ENCODE measurements at regions of chr19 and their contacts with region 1.

Region 1: GRCh38 chr19:52690369-52691214 is 44.3 kb downstream of the ZNF611 start:
- DNase-seq: peak; percentile 98 to 99
- ATAC-seq: peak; percentile 100
- H3K4me3 ChIP-seq: peak overlapping the region; percentile 11 to 36
- H3K27ac ChIP-seq: peak overlapping the region; percentile 92 to 97
- H3K4me1 ChIP-seq: no peaks in the 10 kb centered on the region
- H3K27me3 ChIP-seq: no peaks in the 10 kb centered on the region

Region 2: DNA sequence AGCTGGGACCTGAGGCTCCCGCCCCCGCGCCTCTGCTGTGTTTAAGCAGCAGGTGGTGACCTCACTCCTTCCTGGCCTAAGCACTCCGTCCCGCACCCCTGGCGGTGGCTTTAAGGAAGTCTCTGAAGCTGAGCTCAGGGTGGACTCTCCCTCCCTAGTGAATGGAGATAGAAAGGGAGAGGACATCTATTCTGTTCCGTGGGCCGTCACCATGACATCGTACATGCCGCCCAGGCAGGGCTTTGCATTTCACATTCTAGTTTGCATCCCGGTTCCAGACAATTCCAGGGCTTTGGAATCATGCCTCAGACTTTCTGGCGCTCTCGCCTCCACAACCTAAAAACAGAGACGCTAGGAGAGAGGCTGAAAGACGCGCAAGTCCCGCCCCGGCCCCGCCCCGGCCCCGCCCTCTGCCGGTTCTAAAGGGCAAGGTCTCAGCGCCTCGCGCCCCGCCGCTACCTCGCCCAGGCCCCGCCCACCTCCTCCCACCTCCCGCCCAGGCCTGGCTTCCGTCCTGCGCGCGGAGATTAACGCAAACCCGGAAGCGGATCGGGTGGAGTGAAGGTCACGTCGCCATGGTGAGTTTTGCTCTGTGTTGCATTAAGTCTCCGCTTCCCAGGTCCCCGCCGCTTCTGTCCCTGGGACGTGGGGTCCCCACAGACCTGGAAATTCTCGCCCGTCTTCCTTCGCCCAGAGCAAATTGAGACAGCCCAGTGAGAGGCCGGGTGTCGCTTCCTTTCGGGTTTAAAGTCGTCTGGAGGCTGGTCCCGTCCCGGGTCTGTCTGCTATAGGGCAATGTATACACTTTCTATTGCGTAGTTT is 163.2 kb before region 1 on chr19 and contains the start of gene ZNF808:
- intact Hi-C with region 1: loop called in 1 of 2 experiments (anchors 5 kb)
- DNase-seq: peak; percentile 98 to 99
- ATAC-seq: peak; percentile 99
- H3K4me3 ChIP-seq: peak within 1 kb of the TSS; percentile 72 to 82
- H3K27ac ChIP-seq: peak within 1 kb of the TSS; percentile 68 to 90
- H3K4me1 ChIP-seq: no peaks in the 10 kb centered on the region
- H3K27me3 ChIP-seq: no peaks in the 10 kb centered on the region
- total RNA-seq, gene ZNF808: 19.2 to 36.4 TPM

Region 3: GRCh38 chr19:52601025-52601973 is 89.3 kb before region 1 on chr19:
- intact Hi-C with region 1: loop called in 1 of 2 experiments (anchors 5 kb)
- DNase-seq: peak; percentile 97 to 99
- ATAC-seq: peak; percentile 97
- H3K4me3 ChIP-seq: peak overlapping the region; percentile 48 to 58
- H3K27ac ChIP-seq: peak overlapping the region in 1 of 2 donors; percentile 43
- H3K4me1 ChIP-seq: no peaks in the 10 kb centered on the region
- H3K27me3 ChIP-seq: no peaks in the 10 kb centered on the region

Region 4: DNA sequence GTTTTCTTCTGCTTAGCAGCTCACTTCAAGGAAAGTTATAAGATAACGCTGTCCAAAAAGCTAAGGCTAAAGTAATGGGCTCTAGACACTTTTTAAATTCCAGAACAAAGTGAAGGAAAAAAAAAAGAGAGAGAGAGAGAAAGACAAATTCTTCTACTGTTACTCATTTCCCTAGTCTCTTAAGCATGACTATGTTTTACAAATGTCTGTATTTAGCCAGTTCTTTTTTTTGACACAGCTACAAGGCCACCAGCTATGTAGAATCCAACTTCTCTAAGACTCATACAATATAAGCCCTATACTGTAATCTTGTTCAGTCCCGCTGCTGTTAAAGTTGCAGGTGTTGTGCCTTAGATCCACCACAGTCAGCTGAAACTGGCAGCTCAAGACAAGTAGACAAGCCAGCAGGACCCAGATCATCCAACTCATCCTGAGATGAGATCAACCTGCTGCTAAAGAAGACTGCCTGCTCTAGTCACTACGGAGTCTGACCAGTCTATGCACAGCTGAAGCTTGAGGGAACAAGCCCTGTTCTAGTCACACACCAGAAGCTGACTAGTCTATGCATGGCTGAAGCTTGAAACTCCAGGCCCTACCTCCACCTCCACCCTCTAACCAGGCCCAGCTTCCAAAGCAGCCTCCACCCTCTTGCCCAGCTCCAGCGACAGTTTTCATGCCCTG is 42.1 kb before region 1 on chr19:
- intact Hi-C with region 1: loop called (anchors 2 to 5 kb)
- DNase-seq: no peak
- ATAC-seq: no peak
- H3K4me3 ChIP-seq: no peak overlapping the region
- H3K27ac ChIP-seq: peak overlapping the region; percentile 68 to 84
- H3K4me1 ChIP-seq: peaks cover 0 to 2% of the 10 kb centered on the region in 2 donors
- H3K27me3 ChIP-seq: no peaks in the 10 kb centered on the region

Region 5: DNA sequence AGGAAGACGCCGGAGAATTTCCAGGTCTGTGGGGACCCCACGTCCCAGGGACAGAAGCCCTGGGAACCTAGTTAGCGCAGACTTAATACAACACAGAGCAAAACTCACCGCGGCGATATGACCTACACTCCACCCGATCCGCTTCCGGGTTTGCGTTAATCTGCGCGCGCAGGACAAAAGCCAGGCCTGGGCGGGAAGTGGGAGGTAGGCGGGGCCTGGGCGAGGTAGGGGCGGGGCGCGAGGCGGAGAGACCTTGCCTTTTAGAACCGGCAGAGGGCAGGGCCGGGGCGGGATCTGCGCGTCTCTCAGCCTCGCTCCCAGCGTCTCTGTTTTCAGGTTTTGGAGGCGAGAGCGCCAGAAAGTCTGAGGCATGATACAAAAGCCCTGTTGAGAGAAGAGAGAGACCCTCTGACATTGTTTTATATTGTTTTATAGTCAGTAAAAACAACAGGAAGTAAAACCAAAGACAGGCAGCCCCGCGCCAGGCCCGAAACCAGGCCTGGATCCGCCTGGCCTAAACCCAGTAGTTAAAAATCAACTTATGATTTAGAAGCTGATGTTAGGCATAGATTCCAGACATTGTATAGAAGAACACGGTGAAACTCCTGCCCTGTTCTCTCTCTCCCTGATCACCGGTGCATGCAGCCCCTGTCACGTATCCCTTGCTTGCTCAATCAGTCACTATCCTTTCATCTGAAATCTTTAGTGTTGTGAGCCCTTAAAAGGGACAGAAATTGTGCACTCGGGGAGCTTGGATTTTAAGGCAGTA is 44.5 kb after region 1 on chr19 and contains the start of gene ZNF611:
- intact Hi-C with region 1: loop called in 1 of 2 experiments (anchors 2 kb)
- DNase-seq: peak; percentile 99 to 100
- ATAC-seq: peak; percentile 99
- H3K4me3 ChIP-seq: peak within 1 kb of the TSS; percentile 73 to 80
- H3K27ac ChIP-seq: peak within 1 kb of the TSS in 1 of 2 donors; percentile 65
- H3K4me1 ChIP-seq: no peaks in the 10 kb centered on the region
- H3K27me3 ChIP-seq: no peaks in the 10 kb centered on the region
- total RNA-seq, gene ZNF611: 20.9 to 28.5 TPM